ENCODE measurements at regions of chr4 and their contacts with region 1.

Region 1: DNA sequence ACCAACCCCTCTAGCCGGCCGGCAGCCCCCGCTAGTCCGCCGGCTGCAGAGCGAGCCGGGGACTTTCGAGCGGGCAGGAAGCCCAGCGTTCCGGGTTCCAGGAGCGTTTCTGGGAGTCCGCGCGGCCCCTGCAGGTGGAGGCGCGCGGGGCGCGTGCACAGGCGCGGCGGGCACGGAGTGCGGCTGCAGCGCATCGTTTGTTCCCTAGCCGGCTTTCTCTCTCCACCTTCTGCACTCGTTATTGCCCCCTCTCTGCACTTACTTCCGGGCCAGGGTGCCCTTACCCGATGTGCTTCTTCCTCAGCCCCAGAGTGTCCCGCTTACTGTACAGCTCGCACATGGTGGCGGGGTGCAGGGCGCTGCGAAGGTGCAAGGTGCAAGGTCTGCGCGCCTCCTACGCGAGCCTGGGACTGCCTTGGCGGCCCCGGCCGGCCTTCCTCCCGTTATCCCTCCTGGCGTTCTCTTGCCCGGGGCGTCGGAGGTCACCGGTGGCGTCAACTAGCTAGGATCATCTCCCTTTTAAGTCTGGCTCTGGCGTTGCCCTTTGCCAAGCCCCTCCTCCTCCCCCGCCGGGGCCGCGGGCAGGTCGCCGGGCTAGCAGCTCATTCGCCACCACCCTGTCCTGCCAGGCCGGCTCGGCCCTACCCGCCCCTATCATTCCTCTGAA is at the start of gene ETNPPL:
- DNase-seq: peak; percentile 29 to 85
- H3K4me3 ChIP-seq: peak within 1 kb of the TSS; percentile 65 to 85 (median 72)
- H3K27ac ChIP-seq: no peak within 1 kb of the TSS
- H3K4me1 ChIP-seq: peaks cover 0 to 4% (median 0%) of the 10 kb centered on the region in 4 experiments; a peak in 2 of 7 replicates
- H3K27me3 ChIP-seq: peaks cover 0 to 6% (median 3%) of the 10 kb centered on the region in 4 experiments; a peak in 5 of 7 replicates
- CTCF ChIP-seq: peak in 2 of 3 experiments; percentile 12 to 15; a peak in 2 of 4 replicates
- EP300 ChIP-seq: no peak
- POLR2A ChIP-seq: peak in 1 of 2 experiments; percentile 60; a peak in 1 of 3 replicates
- RAD21 ChIP-seq: peak; percentile 14 to 35; a peak in 2 of 4 replicates
- total RNA-seq, gene ETNPPL: 2.5 and 3.9 TPM in 2 replicates

Region 2: GRCh38 chr4:108749119-108749518 is 13.6 kb before region 1 on chr4:
- CTCF ChIA-PET with region 1: interaction called, 14 read pairs
- POLR2A ChIA-PET with region 1: no interaction called
- DNase-seq: no peak
- H3K4me3 ChIP-seq: no peak overlapping the region
- H3K27ac ChIP-seq: no peak overlapping the region
- H3K4me1 ChIP-seq: no peaks in the 10 kb centered on the region
- H3K27me3 ChIP-seq: no peaks in the 10 kb centered on the region
- CTCF ChIP-seq: peak; percentile 29 to 43 (median 34); a peak in 3 of 4 replicates
- EP300 ChIP-seq: no peak
- POLR2A ChIP-seq: no peak
- RAD21 ChIP-seq: peak in 1 of 2 experiments; percentile 21; a peak in 1 of 4 replicates

Measured in H1 (cell line).